ENCODE measurements at regions of chr4 and their contacts with region 1.

Region 1: GRCh38 chr4:11623726-11624037 is 195.0 kb upstream of the HS3ST1 start:
- DNase-seq: peak; percentile 54
- H3K4me3 Mint-ChIP-seq: no peak overlapping the region
- H3K27ac Mint-ChIP-seq: peak overlapping the region; percentile 97
- H3K4me1 Mint-ChIP-seq: peaks cover 89% of the 10 kb centered on the region
- H3K27me3 Mint-ChIP-seq: no peaks in the 10 kb centered on the region
- CTCF ChIP-seq: no peak

Region 2: DNA sequence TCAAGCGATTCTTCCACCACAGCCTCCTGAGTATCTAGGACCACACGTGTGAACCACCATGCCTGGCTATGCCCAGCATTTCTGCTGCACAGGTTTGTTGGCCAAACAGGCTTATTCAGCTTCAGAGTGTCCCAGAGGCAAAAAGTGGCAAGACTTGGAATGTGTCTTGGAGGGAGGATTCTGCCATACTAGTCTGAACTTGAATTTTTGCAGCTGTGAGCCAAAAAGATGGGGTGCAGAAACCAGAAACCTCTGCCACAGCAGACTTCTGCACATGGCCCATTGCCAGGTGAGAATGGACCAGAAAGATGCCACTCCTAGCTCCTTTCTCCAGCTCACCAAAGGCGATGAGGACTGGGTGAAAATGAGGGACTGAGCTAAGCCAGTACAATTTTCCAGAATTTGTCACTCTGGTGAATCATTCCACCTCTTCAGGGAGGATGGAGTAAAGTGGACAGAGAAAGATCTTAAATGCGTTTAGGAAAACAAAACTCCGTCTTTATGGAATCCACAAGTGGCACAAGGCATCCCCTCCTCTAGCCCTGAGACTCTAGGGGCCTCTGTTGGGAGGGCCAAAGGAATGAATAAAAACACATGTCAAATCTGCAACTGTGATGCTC is 570.0 kb before region 1 on chr4:
- CTCF ChIA-PET with region 1: no interaction called
- intact Hi-C with region 1: no loop called
- DNase-seq: no peak
- H3K4me3 Mint-ChIP-seq: no peak overlapping the region
- H3K27ac Mint-ChIP-seq: no peak overlapping the region
- H3K4me1 Mint-ChIP-seq: no peaks in the 10 kb centered on the region
- H3K27me3 Mint-ChIP-seq: peaks cover 26% of the 10 kb centered on the region
- CTCF ChIP-seq: no peak

Region 3: DNA sequence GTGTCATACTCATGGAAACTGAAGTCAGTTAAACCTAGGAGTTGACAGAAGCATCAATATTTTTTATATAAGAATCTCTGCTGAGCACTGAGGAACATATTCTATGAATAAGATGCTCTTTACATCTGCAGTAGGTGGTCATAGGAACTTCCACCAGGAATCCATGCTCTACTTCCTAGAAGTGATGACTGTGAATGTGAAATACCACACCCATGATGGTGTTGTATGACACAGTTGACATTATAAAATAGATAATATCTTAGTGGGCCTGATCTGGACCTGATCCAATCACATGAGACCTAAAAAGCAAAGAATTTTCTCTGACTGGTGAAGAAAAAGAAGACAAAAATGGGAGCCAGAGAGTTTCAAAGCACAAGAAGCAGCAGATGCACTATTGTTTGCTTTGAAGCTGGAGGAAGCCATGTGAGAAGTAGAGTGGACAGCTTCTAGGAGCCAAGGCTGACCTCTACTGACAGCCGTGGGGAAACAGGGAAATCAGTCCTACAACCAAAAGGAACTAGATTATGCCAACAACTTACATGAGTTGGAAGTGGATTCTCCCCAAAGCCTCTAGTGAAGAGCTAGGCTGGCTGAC is 126.4 kb before region 1 on chr4:
- CTCF ChIA-PET with region 1: interaction called, 3 read pairs
- intact Hi-C with region 1: loop called (anchors 2 kb)
- DNase-seq: peak; percentile 42
- H3K4me3 Mint-ChIP-seq: no peak overlapping the region
- H3K27ac Mint-ChIP-seq: peak overlapping the region; percentile 93
- H3K4me1 Mint-ChIP-seq: peaks cover 55% of the 10 kb centered on the region
- H3K27me3 Mint-ChIP-seq: no peaks in the 10 kb centered on the region
- CTCF ChIP-seq: no peak

Region 4: GRCh38 chr4:11505221-11505971 is 118.3 kb before region 1 on chr4:
- CTCF ChIA-PET with region 1: interaction called, 4 read pairs
- intact Hi-C with region 1: loop called (anchors 2 kb)
- DNase-seq: peak; percentile 69
- H3K4me3 Mint-ChIP-seq: peak overlapping the region; percentile 25
- H3K27ac Mint-ChIP-seq: peak overlapping the region; percentile 99
- H3K4me1 Mint-ChIP-seq: peaks cover 68% of the 10 kb centered on the region
- H3K27me3 Mint-ChIP-seq: no peaks in the 10 kb centered on the region
- CTCF ChIP-seq: no peak

Region 5: GRCh38 chr4:11635359-11636072 is 11.8 kb after region 1 on chr4:
- CTCF ChIA-PET with region 1: interaction called, 6 read pairs
- intact Hi-C with region 1: loop called (anchors 1 kb)
- DNase-seq: peak; percentile 56
- H3K4me3 Mint-ChIP-seq: no peak overlapping the region
- H3K27ac Mint-ChIP-seq: peak overlapping the region; percentile 98
- H3K4me1 Mint-ChIP-seq: peaks cover 66% of the 10 kb centered on the region
- H3K27me3 Mint-ChIP-seq: no peaks in the 10 kb centered on the region
- CTCF ChIP-seq: no peak

Region 6: GRCh38 chr4:11720292-11720691 is 96.6 kb after region 1 on chr4:
- CTCF ChIA-PET with region 1: interaction called, 3 read pairs
- intact Hi-C with region 1: loop called (anchors 5 kb)
- DNase-seq: peak; percentile 40
- H3K4me3 Mint-ChIP-seq: no peak overlapping the region
- H3K27ac Mint-ChIP-seq: peak overlapping the region; percentile 70
- H3K4me1 Mint-ChIP-seq: peaks cover 32% of the 10 kb centered on the region
- H3K27me3 Mint-ChIP-seq: no peaks in the 10 kb centered on the region
- CTCF ChIP-seq: peak; percentile 48